ENCODE measurements at regions of chr12 and their contacts with region 1.

Region 1: GRCh38 chr12:53492830-53493611 is 6.2 kb downstream of the MAP3K12 start:
- DNase-seq: peak; percentile 88
- H3K4me3 Mint-ChIP-seq: peak overlapping the region; percentile 91
- H3K27ac Mint-ChIP-seq: peak overlapping the region; percentile 63
- H3K4me1 Mint-ChIP-seq: peaks cover 38% of the 10 kb centered on the region
- H3K27me3 Mint-ChIP-seq: no peaks in the 10 kb centered on the region

Region 2: GRCh38 chr12:53145383-53146260 is 347.4 kb before region 1 on chr12:
- CTCF ChIA-PET with region 1: no interaction called
- POLR2A ChIA-PET with region 1: no interaction called
- DNase-seq: no peak
- H3K4me3 Mint-ChIP-seq: no peak overlapping the region
- H3K27ac Mint-ChIP-seq: no peak overlapping the region
- H3K4me1 Mint-ChIP-seq: no peaks in the 10 kb centered on the region
- H3K27me3 Mint-ChIP-seq: peaks cover 8% of the 10 kb centered on the region

Region 3: DNA sequence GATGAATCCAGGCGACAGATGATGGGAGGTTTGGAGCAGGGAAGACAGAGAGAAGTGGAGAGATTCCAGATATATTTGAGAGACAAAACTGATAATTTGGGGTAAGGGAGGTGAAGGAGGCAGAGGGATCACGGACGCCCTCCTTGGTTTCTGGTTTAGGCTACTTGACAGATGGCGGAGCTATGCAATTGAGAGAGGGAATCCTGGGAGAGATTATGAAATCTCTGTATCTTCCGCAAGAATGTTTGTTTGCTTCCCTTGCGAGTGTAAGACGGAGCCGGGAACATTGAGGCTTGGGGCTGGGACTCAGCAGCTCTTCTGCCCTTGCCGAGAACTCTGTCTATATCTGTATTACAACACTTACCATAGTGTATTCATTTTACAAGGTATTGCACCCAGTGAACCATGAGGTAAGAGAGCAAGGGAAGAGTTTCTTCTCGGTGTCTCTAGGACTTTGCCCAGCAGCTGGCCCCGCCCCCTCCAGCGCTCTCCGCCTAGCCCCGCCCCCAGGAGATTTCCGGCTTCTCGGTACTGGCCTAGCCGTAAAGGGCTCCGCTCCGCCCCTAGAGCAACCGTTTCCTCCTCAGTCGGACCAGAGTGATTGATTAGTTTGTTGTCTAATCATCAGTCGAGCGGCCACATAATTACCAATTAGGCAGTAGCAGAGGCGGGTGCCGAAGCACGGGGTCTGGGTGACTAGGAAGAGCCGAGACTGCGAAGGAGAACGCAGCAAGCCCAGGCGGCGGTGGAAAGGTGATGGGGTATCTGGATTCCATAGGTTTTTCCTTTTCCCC is 51.8 kb before region 1 on chr12 and contains the start of gene PRR13:
- CTCF ChIA-PET with region 1: no interaction called
- POLR2A ChIA-PET with region 1: no interaction called
- DNase-seq: peak; percentile 99
- H3K4me3 Mint-ChIP-seq: peak within 1 kb of the TSS; percentile 90
- H3K27ac Mint-ChIP-seq: peak within 1 kb of the TSS; percentile 88
- H3K4me1 Mint-ChIP-seq: peaks cover 43% of the 10 kb centered on the region
- H3K27me3 Mint-ChIP-seq: no peaks in the 10 kb centered on the region
- total RNA-seq, gene PRR13: 242 to 246 TPM

Region 4: DNA sequence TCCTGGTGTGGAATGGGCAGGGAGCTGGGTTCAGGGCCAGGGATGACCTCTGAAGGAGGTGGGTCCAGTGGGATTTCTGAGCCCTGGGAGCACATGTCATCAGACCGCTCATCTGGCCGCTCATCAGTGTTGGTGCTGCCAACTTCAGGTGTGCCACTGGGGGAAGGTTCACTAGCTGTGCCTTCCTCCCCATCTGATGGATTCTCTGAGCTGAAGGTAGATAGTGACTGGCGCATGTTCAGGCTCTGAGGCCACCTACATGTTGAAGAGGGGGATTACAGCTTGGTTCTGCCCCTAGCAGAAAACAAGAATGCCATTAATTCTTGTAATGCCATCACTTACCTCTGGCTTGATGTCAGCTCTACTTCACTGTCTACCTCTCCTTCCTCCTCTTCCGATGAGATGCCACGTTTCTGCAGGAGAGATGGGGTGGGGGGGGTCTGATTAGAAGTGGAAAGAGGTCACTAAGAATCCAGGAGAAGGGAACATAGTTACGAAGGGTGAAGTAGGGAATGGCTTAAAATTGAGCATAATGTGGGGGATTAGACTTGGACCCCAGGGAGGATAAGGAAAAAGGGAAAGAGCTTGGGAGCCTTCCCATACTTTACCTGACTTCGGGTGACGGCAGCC is 10.9 kb before region 1 on chr12:
- CTCF ChIA-PET with region 1: interaction called, 9 read pairs
- POLR2A ChIA-PET with region 1: interaction called, 34 read pairs
- DNase-seq: no peak
- H3K4me3 Mint-ChIP-seq: no peak overlapping the region
- H3K27ac Mint-ChIP-seq: no peak overlapping the region
- H3K4me1 Mint-ChIP-seq: peaks cover 19% of the 10 kb centered on the region
- H3K27me3 Mint-ChIP-seq: no peaks in the 10 kb centered on the region

Region 5: GRCh38 chr12:53625946-53626701 is 133.1 kb after region 1 on chr12 and contains the start of gene ATF7:
- CTCF ChIA-PET with region 1: no interaction called
- POLR2A ChIA-PET with region 1: no interaction called
- DNase-seq: peak; percentile 98
- H3K4me3 Mint-ChIP-seq: peak within 1 kb of the TSS; percentile 99
- H3K27ac Mint-ChIP-seq: peak within 1 kb of the TSS; percentile 87
- H3K4me1 Mint-ChIP-seq: peaks cover 38% of the 10 kb centered on the region
- H3K27me3 Mint-ChIP-seq: peaks cover 4% of the 10 kb centered on the region
- total RNA-seq, gene ATF7: 21.4 to 24.0 TPM